OCI-LY7 (cell line): ENCODE measurements at regions of chr1 and their contacts with region 1.

Region 1: GRCh38 chr1:163174524-163175437 is 27.9 kb downstream of the RGS5 start:
- DNase-seq: peak; percentile 44
- H3K4me3 ChIP-seq: no peak overlapping the region
- H3K27ac ChIP-seq: no peak overlapping the region
- H3K4me1 ChIP-seq: no peaks in the 10 kb centered on the region
- CTCF ChIP-seq: peak; percentile 93

Region 2: DNA sequence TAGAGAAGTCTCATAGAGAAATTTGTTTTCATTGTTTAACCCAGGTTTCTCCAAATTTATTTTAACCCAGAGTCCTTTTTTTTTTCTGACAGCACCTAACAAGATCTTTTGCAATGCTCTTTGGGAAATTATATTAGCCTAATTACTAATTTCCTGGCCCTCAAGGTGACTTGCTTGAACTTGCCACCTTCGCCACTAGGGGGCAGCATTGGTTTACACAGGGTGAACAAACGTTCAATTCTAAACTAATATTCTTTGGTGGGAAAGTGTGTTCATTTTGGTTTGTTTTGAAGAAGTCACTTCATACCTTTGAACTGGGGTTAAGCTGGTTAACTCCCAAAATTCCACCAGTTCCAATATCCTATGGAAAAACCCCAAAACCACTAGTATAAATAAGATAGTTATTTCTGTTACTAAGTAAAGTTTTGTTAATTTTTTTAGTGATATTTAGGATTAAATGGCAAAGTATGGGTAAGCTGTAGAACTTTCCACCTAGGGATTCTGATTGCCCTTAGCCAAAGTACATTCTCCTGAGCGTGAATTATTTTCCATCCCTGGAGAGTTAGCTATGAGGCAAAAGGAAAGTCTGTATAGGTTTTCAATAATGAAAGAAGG is 326.8 kb before region 1 on chr1:
- CTCF ChIA-PET with region 1: no interaction called
- POLR2A ChIA-PET with region 1: no interaction called
- intact Hi-C with region 1: loop called (anchors 5 kb)
- DNase-seq: peak; percentile 77
- H3K4me3 ChIP-seq: no peak overlapping the region
- H3K27ac ChIP-seq: no peak overlapping the region
- H3K4me1 ChIP-seq: no peaks in the 10 kb centered on the region
- CTCF ChIP-seq: peak; percentile 99

Region 3: GRCh38 chr1:163071405-163072255 is 103.2 kb before region 1 on chr1:
- CTCF ChIA-PET with region 1: no interaction called
- POLR2A ChIA-PET with region 1: interaction called, 4 read pairs
- intact Hi-C with region 1: loop called (anchors 10 kb)
- DNase-seq: peak; percentile 43
- H3K4me3 ChIP-seq: no peak overlapping the region
- H3K27ac ChIP-seq: no peak overlapping the region
- H3K4me1 ChIP-seq: no peaks in the 10 kb centered on the region
- CTCF ChIP-seq: peak; percentile 74